ENCODE measurements at regions of chrX and their contacts with region 1.

Region 1: GRCh38 chrX:115560978-115561604 is at the start of gene PLS3:
- DNase-seq: peak; percentile 93
- ATAC-seq: peak; percentile 92
- total RNA-seq, gene PLS3: 44.7 TPM

Region 2: DNA sequence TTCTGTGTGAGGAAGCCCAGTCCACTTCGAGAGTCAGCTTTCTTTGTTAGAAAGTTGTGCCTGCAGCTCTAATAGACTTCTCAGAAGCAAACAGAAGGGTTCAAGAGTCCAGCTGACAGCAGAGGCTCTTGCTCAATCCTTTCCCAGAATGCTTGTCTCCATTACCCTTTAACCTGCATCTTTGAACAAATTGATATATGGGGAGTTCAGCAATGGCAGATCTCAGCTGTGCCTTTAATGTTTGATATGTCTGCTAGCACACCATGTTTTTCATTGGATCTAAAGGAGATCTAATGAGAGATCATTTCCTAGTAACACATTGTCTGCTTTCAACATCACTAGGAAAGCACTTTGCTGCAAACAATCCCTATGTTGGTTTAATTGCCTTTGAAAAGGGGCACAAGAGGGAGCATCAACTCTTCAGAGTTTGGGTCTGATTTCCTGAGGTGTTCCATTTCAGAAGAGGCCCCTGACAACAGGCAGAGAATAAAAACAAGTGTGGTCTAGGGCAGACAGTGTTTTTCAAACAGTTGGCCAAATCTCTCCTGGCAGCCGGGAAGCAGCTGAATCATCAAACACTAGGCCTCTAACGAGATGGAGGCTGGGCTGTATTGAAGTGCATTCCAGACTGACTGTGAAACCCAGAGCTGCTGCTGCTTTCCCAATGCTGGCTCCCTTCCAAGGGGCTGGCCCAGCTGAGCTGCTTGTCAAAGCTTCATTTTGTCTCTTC is 216.0 kb before region 1 on chrX:
- intact Hi-C with region 1: loop called (anchors 5 kb)
- DNase-seq: peak; percentile 83
- ATAC-seq: peak; percentile 95

Region 3: DNA sequence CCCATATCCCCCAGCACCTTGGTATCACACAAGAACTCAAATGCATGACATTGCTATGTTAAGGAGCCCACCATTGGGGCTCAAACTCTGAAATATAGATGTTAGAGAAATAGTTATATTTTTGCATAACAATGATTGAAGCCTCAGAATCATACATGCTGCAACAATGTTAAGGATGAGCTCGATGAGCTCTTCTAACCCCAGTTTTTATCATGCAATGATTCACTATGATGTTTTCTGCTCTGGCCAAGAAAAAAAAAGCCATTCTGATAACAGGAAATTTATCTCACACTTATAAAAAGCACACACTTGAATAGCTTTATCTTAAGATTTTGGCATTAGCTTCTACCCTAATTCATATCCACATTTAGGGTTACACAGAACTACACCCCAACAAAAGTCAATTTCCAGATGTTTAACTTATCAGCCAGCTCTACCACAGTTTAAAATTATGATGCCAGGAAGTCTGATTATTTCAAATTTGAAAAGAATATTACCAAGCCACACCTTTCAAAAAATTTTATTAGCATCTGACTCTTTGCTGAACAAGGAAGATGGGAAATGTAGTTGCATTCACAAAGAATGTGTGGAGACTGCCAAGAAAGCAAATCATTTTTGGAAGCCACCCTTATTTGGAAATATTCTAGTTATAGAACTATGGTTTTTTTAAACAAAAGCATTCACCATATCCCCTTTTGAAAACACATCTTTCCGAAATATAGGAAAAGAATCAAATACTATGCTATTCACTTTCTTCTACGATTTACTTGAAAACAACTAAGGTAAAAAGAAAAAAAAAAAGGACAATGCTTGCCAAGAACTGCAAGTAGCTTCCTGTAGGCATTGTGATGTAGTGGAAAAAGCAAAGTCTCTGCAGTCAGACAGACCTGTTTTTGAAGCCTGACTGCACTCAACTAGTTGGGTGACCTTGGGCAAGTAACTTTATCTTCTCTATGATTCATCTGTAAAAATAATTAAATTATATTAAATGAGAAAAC is 100.9 kb before region 1 on chrX:
- intact Hi-C with region 1: loop called (anchors 10 kb)
- DNase-seq: no peak
- ATAC-seq: no peak

Region 4: GRCh38 chrX:115535844-115536243 is 25.2 kb before region 1 on chrX:
- intact Hi-C with region 1: no loop called
- DNase-seq: no peak
- ATAC-seq: no peak

Region 5: DNA sequence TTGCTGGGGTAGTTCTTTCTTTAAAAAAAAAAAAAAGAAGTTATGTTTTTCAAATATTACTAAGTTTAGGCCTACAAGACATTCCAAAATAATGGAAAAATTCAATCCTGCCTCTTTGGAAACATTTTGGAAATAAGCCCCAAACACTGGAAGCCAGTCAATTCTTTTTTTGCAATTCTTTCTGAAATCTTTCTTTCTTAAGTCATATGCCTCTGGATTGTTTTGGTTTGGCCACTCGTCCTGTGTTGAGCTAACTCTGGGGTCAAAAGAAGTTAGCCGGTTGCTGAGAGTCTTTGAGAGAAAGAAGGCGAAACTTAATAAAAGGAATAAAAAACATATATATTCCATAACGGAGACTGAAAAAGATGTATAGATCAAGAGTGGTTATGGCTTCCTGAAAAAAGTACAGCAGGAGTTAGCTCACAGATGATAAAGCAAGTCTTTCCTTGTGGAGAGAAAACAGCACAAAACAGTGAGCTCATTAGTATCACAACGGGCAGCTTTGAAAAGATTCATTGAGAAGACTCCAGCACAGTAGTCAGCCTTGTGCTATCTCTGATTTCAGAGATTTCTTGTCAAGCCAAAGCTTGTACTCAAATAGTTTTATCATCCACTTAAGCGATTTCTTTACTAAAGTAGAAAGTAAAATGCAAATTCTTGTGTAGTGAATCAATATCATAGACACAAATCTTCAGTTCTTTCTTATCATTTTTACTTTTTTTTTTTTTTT is 64.6 kb after region 1 on chrX:
- intact Hi-C with region 1: loop called (anchors 5 kb)
- DNase-seq: no peak
- ATAC-seq: peak; percentile 56

Region 6: DNA sequence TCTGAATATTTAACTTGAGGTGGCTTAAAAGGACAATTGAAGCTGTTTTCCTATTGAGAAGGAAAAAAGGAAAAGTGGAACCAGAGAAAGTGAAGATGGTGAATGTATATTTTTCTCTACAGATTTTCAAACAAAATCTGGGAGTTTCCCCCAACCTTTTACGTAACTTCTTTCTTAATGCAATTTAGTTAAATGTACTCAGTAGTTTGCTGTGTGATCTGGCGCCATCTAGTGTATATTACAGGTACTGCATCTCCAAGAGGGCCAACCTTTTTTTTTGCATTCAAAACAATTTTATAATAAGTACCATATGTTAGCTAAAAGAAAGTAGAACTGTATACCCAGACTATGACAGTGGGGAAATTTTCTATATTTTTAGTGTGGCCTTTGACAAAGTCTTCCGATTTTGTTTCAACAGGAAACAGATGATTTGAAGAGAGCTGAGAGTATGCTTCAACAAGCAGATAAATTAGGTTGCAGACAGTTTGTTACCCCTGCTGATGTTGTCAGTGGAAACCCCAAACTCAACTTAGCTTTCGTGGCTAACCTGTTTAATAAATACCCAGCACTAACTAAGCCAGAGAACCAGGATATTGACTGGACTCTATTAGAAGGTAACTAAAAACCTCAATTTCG is 81.9 kb after region 1 on chrX:
- intact Hi-C with region 1: loop called (anchors 5 kb)
- DNase-seq: no peak
- ATAC-seq: no peak